ENCODE measurements at regions of chr20 and their contacts with region 1.

Region 1: DNA sequence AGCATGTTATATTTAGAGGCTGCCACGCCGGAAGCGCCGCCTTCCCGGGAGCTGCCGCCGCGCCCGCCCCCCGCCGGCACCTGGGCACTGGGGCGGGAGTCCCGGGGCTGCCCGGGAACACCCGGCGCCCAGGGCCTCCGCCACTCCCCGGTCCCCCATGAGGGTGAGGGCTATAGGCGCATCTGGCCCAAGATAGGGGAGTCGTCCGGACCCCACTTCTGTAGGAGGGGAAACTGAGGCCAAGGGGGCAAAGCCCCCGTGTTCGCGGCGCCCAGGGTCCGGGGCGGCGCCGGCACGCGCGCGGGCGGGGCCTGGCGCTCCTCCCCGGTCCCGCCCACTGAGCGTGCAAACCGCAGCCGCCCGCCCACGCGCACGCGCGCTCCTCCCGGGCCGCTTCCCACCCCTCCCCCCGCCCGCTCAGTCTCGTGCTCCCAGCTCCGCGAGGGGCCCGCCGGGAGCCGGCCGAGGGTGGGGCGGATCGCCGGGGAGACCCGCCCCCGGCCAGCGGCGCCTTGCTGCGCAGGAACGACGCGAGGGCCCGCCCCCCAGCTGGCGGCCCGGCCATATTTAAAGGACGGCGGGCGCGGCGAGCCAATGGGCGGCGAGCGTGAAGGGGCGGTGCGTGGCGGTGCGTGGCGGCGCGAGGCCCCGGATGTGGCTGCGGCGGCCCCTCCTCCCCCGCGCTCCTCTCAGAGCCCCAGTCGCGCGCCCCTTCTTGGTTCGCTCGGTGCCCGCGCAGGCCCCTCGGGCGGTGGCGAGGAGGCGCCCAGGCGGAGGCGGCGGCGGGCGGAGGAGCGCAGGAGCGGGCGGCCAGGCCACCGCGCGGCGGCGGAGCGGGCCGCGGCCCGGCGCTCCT is at the start of gene LSM14B:
- DNase-seq: peak; percentile 92
- ATAC-seq: peak; percentile 80
- H3K4me3 Mint-ChIP-seq: peak within 1 kb of the TSS; percentile 84
- H3K27ac Mint-ChIP-seq: peak within 1 kb of the TSS; percentile 95
- H3K4me1 Mint-ChIP-seq: peaks cover 31% of the 10 kb centered on the region
- H3K27me3 Mint-ChIP-seq: no peaks in the 10 kb centered on the region
- CTCF ChIP-seq: no peak
- total RNA-seq, gene LSM14B: 67.4 to 73.5 TPM (median 69.7 TPM) in 3 replicates

Region 2: DNA sequence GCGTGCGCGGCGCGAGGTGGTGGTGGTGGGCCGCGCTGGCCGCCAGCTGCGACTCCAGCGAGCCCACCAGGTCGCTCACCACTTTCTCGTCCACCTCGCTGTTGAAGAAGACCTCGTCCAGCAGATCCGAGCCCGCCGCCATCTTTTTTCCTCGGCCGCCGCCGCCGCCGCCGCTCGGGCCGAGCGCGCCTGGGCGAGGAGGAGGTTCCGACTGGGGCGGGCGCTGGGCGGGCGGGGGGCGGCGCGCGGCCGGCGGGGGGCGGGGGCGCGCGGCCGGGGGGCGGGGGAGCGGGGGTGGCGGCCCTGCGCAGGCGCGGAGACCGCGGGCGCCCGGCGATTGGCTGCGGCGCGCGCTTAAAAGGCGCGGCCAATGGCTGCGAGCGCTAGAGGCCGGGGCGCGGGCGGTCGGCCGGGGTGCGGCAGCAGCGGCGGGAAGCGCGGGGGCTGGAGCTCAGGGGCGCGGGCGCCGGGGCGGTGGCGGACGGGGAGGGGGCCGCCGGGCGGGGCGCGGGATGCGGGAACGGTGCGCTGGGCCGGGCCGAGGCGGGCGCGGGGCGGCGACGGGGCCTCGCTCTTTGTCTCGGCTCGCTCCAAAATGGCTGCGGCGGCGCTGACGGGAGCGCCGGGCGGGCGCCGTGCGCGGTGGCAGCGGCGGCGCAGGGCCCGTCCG is 56.2 kb before region 1 on chr20 and contains the start of gene TAF4:
- CTCF ChIA-PET with region 1: interaction called, 11 read pairs
- POLR2A ChIA-PET with region 1: interaction called, 24 read pairs
- DNase-seq: peak; percentile 70
- ATAC-seq: peak; percentile 50
- H3K4me3 Mint-ChIP-seq: peak within 1 kb of the TSS; percentile 83
- H3K27ac Mint-ChIP-seq: peak within 1 kb of the TSS; percentile 95
- H3K4me1 Mint-ChIP-seq: peaks cover 55% of the 10 kb centered on the region
- H3K27me3 Mint-ChIP-seq: no peaks in the 10 kb centered on the region
- CTCF ChIP-seq: no peak
- total RNA-seq, gene TAF4: 31.0 to 34.4 TPM (median 33.7 TPM) in 3 replicates

Region 3: GRCh38 chr20:62177307-62177706 is 55.3 kb after region 1 on chr20:
- CTCF ChIA-PET with region 1: no interaction called
- POLR2A ChIA-PET with region 1: no interaction called
- DNase-seq: no peak
- ATAC-seq: no peak
- H3K4me3 Mint-ChIP-seq: no peak overlapping the region
- H3K27ac Mint-ChIP-seq: no peak overlapping the region
- H3K4me1 Mint-ChIP-seq: peaks cover 8% of the 10 kb centered on the region
- H3K27me3 Mint-ChIP-seq: no peaks in the 10 kb centered on the region
- CTCF ChIP-seq: no peak